ENCODE measurements at regions of chr5 and their contacts with region 1.

Region 1: GRCh38 chr5:136802383-136802782 is 437.0 kb upstream of the TRPC7 start:
- DNase-seq: no peak
- H3K4me3 ChIP-seq: no peak overlapping the region
- H3K27ac ChIP-seq: no peak overlapping the region
- H3K4me1 ChIP-seq: no peaks in the 10 kb centered on the region
- H3K27me3 ChIP-seq: no peaks in the 10 kb centered on the region
- CTCF ChIP-seq: no peak
- EP300 ChIP-seq: no peak
- POLR2A ChIP-seq: no peak

Region 2: GRCh38 chr5:136457390-136458013 is 344.9 kb before region 1 on chr5:
- in situ Hi-C with region 1: no loop called
- intact Hi-C with region 1: no loop called
- DNase-seq: no peak
- H3K4me3 ChIP-seq: no peak overlapping the region
- H3K27ac ChIP-seq: no peak overlapping the region
- H3K4me1 ChIP-seq: no peaks in the 10 kb centered on the region
- H3K27me3 ChIP-seq: no peaks in the 10 kb centered on the region
- CTCF ChIP-seq: no peak
- EP300 ChIP-seq: no peak
- POLR2A ChIP-seq: no peak

Region 3: GRCh38 chr5:136638077-136638476 is 164.3 kb before region 1 on chr5:
- in situ Hi-C with region 1: no loop called
- intact Hi-C with region 1: no loop called
- DNase-seq: no peak
- H3K4me3 ChIP-seq: no peak overlapping the region
- H3K27ac ChIP-seq: no peak overlapping the region
- H3K4me1 ChIP-seq: no peaks in the 10 kb centered on the region
- H3K27me3 ChIP-seq: no peaks in the 10 kb centered on the region
- CTCF ChIP-seq: no peak
- EP300 ChIP-seq: no peak
- POLR2A ChIP-seq: no peak

Region 4: GRCh38 chr5:137220523-137220927 is 418.1 kb after region 1 on chr5:
- in situ Hi-C with region 1: loop called in 1 of 4 experiments (anchors 25 kb)
- intact Hi-C with region 1: no loop called
- DNase-seq: no peak
- H3K4me3 ChIP-seq: no peak overlapping the region
- H3K27ac ChIP-seq: no peak overlapping the region
- H3K4me1 ChIP-seq: peaks cover 0 to 4% (median 0%) of the 10 kb centered on the region in 4 donors
- H3K27me3 ChIP-seq: no peaks in the 10 kb centered on the region
- CTCF ChIP-seq: peak in 4 of 5 experiments; percentile 9 to 20 (median 15)
- EP300 ChIP-seq: no peak
- POLR2A ChIP-seq: no peak

Measured in transverse colon (tissue), 4 donors.